Posterior cingulate gyrus (tissue), 11 donors: ENCODE measurements at regions of chr6 and their contacts with region 1.

Region 1: GRCh38 chr6:16409531-16410441 is 171.4 kb downstream of the GMPR start:
- DNase-seq: peak; percentile 26 to 95 (median 67)

Region 2: GRCh38 chr6:16420715-16421461 is 11.1 kb after region 1 on chr6:
- intact Hi-C with region 1: no loop called
- DNase-seq: no peak

Region 3: DNA sequence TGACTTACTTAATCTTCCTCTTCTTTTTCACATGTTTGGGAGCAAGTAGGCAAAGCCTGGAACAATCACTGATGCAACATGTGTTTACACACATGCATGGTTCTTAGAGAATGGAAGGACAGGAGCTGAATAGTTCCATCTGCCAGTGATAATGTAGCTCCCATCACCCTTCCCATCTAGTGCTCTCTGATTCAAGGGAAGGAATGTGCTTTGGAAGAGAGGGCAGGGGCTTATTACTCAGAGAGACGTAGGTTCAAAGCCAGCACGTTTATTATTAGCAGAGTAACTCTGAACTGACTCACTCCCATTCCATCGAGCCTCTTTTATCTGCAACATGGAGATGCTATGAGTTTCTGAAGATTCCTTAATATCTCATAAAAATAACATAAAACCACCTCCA is 40.5 kb after region 1 on chr6:
- intact Hi-C with region 1: no loop called
- DNase-seq: no peak

Region 4: DNA sequence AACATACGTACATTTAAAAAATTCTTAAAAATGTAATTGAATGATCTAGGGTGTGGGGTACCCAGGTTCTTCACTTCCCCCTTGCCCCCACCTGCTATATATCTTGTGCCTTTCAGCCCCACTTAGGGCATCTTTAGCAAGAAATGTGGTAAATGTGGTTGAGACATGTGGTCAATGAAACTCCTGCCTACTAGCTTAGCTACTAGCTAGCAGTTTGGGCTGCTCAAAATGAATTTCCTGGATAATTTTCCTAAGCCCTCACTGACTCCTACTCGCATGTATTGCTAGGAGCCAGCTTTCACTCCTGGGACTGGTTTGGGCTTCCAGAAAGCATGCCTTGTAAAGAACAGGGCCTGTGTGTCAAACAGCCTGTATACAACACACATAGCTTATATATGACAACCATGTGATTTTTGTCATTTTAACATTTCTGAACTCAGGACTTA is 94.2 kb after region 1 on chr6:
- intact Hi-C with region 1: loop called (anchors 10 kb)
- DNase-seq: no peak

Region 5: DNA sequence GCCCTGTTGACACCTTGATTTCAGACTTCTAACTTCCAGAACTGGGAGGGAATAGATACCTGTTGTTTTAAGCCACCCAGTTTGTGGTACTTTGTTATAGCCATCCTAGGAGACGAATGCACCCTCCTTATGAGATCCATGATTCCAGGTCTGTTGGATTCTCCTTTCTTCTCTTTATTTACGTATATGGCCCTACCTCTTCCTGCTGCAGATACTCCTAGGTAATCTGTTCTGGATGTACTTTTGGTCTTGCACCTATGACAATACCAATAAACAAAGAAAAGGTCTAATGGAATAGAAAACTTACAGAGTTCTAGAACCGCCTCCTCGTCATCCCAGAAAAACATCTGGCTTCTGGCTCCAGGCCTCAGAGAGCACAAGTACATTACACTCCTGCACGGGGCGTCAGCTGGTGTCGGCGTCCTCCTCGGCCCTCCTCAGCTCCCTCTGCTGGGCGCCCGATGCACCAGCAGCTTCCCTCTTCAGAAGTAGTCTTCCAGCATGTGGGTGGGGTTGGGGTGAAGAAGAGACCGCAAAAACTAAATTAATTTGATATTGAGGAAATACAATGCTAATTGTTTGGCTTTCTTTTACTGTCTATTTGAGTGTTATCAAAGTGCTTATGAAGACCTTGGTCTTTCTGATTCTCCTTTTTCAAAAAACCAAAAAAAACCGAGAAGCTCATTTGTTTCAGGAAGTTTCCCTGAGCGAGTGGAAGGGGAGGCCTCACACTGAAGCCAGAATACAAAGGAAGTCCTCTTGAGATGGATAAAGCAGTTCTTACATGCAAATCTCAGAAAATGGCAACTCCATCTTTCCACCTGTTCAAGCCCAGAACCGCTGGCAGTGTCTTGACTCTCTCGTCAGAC is 361.1 kb after region 1 on chr6:
- intact Hi-C with region 1: loop called (anchors 5 kb)
- DNase-seq: peak; percentile 21 to 96 (median 70)